Posterior cingulate gyrus (tissue), 11 donors: ENCODE measurements at regions of chr11 and their contacts with region 1.

Region 1: GRCh38 chr11:88543902-88544655 is 206.5 kb upstream of the CTSC start:
- DNase-seq: peak; percentile 55 to 96 (median 70)

Region 2: DNA sequence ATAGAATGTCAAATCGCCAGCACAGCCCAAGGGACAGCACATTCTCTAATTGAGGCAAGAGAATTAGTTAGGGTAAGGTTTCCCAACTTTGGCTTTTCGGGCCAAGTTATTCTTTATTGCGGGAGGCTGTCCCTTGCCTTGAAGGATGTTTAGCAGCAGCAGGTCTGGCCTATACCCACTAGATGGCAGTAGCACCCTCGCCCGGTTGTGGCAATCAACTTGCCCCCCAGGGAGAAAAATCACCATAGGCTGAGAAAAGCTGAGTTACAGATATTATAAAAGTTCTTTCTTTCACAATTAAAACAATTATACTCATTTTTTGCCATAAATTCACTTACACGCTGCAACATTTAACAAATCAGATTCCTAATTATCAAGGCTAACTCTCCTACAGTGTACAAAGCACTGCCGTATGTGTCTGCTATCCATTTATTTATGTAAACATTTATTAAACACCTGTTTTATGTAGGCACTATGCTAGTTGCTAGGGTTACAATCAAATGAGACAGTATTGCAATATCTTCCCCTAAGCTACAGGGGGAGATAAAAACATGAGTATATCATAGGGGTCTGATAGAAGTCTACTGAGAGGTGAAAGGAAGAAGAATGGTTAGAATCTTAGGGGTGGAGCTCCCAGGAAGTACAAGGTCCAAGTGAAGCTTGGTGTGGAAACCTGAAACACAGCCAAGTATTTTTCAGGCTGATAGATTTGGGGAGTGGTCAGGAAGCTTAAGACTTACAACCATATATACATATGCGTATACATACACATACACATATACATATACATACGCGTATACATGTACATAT is 821.1 kb before region 1 on chr11:
- intact Hi-C with region 1: loop called (anchors 5 kb)
- DNase-seq: peak in 7 of 10 donors; percentile 16 to 88 (median 23)

Region 3: DNA sequence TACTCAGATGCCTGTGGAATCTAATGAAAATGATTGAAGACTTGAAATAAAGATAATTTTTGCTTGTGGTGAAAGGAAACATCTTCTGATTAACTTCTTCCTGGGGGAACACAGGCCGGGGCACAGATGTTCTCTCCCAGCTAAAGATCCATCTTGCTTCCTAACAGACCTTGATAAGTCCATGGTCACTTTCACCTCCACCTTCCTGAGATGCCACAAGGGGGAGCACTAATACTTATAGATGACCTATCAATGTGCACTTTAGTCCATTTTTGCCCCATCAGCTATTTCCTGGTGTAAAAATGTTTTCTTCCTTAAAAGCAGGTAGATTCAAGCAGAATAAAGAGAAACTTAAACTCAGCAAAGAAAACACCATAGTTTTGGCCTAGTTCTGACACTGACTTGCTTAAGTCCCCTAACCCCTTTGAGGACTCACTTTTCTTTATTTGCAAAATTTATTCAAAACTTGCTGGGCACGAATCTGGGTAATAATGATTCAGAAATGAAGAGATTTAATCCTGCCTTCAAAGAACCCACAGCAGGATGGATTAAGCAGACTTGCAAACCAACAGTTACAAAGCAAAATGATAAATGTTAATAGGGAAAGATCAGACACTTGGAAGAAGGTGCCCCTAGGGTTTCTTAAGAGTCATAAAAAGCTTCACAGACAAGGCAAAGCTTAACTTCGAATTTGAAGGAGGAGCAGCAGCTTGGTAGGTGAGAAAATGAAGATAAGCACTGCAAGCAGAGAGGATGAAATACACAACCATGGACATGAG is 527.5 kb before region 1 on chr11:
- intact Hi-C with region 1: loop called (anchors 1 kb)
- DNase-seq: peak in 8 of 10 donors; percentile 15 to 69 (median 41)

Region 4: GRCh38 chr11:88421530-88421929 is 122.5 kb before region 1 on chr11:
- intact Hi-C with region 1: no loop called
- DNase-seq: no peak

Region 5: GRCh38 chr11:88484873-88485621 is 59.0 kb before region 1 on chr11:
- intact Hi-C with region 1: no loop called
- DNase-seq: peak in 2 of 10 donors; percentile 37 to 76

Region 6: GRCh38 chr11:88744140-88744539 is 200.1 kb after region 1 on chr11:
- intact Hi-C with region 1: no loop called
- DNase-seq: no peak